ENCODE measurements at regions of chr17 and their contacts with region 1.

Region 1: GRCh38 chr17:4565209-4566141 is 5.1 kb upstream of the GGT6 start:
- DNase-seq: peak; percentile 84
- H3K4me3 Mint-ChIP-seq: no peak overlapping the region
- H3K27ac Mint-ChIP-seq: peak overlapping the region; percentile 44
- H3K4me1 Mint-ChIP-seq: peaks cover 14% of the 10 kb centered on the region
- H3K27me3 Mint-ChIP-seq: no peaks in the 10 kb centered on the region
- CTCF ChIP-seq: peak; percentile 79

Region 2: DNA sequence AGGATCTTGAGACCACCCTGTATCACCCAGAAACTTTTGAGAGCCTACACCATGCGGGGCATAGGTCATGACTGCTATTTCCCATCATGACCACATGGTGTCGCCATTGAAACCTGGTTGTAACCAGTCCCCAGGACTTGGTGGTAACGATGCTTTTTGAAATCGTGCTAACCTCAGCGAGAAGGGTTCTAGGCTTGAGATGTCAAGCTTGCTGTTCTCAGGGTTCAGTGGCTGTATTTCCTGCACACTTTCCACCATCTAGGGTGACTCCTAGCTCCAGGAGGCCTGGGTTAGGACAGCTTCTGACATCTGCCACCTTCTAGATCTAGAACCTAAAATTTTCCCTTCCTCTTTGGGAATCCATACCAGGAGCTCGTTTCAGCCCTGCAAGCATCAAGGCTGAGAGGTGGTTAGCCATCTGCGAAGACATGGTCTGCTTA is 144.8 kb before region 1 on chr17:
- CTCF ChIA-PET with region 1: interaction called, 20 read pairs
- POLR2A ChIA-PET with region 1: no interaction called
- intact Hi-C with region 1: loop called (anchors 1 kb)
- DNase-seq: peak; percentile 75
- H3K4me3 Mint-ChIP-seq: no peak overlapping the region
- H3K27ac Mint-ChIP-seq: no peak overlapping the region
- H3K4me1 Mint-ChIP-seq: no peaks in the 10 kb centered on the region
- H3K27me3 Mint-ChIP-seq: no peaks in the 10 kb centered on the region
- CTCF ChIP-seq: peak; percentile 80

Region 3: GRCh38 chr17:4444782-4445473 is 120.5 kb before region 1 on chr17:
- CTCF ChIA-PET with region 1: no interaction called
- POLR2A ChIA-PET with region 1: no interaction called
- intact Hi-C with region 1: no loop called
- DNase-seq: peak; percentile 51
- H3K4me3 Mint-ChIP-seq: no peak overlapping the region
- H3K27ac Mint-ChIP-seq: no peak overlapping the region
- H3K4me1 Mint-ChIP-seq: peaks cover 8% of the 10 kb centered on the region
- H3K27me3 Mint-ChIP-seq: peaks cover 15% of the 10 kb centered on the region
- CTCF ChIP-seq: no peak

Region 4: GRCh38 chr17:4599505-4600306 is 34.2 kb after region 1 on chr17:
- CTCF ChIA-PET with region 1: interaction called, 13 read pairs
- POLR2A ChIA-PET with region 1: interaction called, 3 read pairs
- intact Hi-C with region 1: no loop called
- DNase-seq: no peak
- H3K4me3 Mint-ChIP-seq: no peak overlapping the region
- H3K27ac Mint-ChIP-seq: no peak overlapping the region
- H3K4me1 Mint-ChIP-seq: no peaks in the 10 kb centered on the region
- H3K27me3 Mint-ChIP-seq: peaks cover 20% of the 10 kb centered on the region
- CTCF ChIP-seq: no peak

Region 5: DNA sequence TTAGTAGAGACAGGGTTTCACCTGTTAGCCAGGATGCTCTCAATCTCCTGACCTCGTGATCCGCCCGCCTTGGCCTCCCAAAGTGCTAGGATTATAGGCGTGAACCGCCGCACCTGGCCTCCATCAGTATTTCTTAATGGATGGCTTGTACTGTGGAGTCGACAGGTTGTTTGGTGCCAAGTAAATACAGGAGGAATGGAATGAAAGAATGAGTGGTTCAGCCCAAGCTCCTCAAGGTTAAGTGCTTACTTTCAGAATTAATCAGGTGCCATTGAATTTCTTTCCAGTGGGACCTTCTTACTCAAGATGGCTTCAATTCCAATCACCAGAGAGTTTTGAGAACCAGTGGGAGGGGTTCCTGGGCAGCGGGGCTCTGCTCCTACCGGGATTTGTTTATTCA is 51.0 kb after region 1 on chr17:
- CTCF ChIA-PET with region 1: interaction called, 25 read pairs
- POLR2A ChIA-PET with region 1: no interaction called
- intact Hi-C with region 1: no loop called
- DNase-seq: no peak
- H3K4me3 Mint-ChIP-seq: no peak overlapping the region
- H3K27ac Mint-ChIP-seq: no peak overlapping the region
- H3K4me1 Mint-ChIP-seq: no peaks in the 10 kb centered on the region
- H3K27me3 Mint-ChIP-seq: peaks cover 33% of the 10 kb centered on the region
- CTCF ChIP-seq: no peak

Region 6: GRCh38 chr17:4631836-4632580 is 66.5 kb after region 1 on chr17:
- CTCF ChIA-PET with region 1: interaction called, 191 read pairs
- POLR2A ChIA-PET with region 1: interaction called, 3 read pairs
- intact Hi-C with region 1: no loop called
- DNase-seq: no peak
- H3K4me3 Mint-ChIP-seq: no peak overlapping the region
- H3K27ac Mint-ChIP-seq: no peak overlapping the region
- H3K4me1 Mint-ChIP-seq: no peaks in the 10 kb centered on the region
- H3K27me3 Mint-ChIP-seq: peaks cover 26% of the 10 kb centered on the region
- CTCF ChIP-seq: no peak

Region 7: DNA sequence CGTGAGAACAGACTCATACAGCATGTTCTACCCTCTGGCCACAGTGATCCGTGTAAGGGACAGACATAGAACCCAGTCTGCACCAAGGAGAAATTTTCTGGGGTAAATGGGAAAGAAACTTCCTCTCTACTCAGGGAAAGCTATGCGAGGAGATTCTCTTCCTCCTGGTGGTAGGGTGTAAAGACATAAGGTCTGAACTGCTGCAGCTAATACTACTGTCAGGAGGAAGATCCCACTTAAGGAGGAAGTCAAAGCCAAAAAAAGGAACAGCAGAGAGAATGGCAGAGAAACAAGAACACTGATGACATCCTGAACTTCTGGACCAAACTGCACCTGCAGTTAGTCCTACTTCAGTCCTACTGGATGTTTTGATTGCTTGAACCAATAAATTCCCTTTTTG is 199.1 kb after region 1 on chr17:
- CTCF ChIA-PET with region 1: no interaction called
- POLR2A ChIA-PET with region 1: no interaction called
- intact Hi-C with region 1: no loop called
- DNase-seq: no peak
- H3K4me3 Mint-ChIP-seq: no peak overlapping the region
- H3K27ac Mint-ChIP-seq: no peak overlapping the region
- H3K4me1 Mint-ChIP-seq: no peaks in the 10 kb centered on the region
- H3K27me3 Mint-ChIP-seq: peaks cover 18% of the 10 kb centered on the region
- CTCF ChIP-seq: no peak

Region 8: GRCh38 chr17:4872786-4873185 is 307.3 kb after region 1 on chr17:
- CTCF ChIA-PET with region 1: no interaction called
- POLR2A ChIA-PET with region 1: no interaction called
- intact Hi-C with region 1: no loop called
- DNase-seq: no peak
- H3K4me3 Mint-ChIP-seq: no peak overlapping the region
- H3K27ac Mint-ChIP-seq: peak overlapping the region; percentile 7
- H3K4me1 Mint-ChIP-seq: peaks cover 17% of the 10 kb centered on the region
- H3K27me3 Mint-ChIP-seq: no peaks in the 10 kb centered on the region
- CTCF ChIP-seq: no peak

Region 9: GRCh38 chr17:5065227-5065744 is 499.8 kb after region 1 on chr17:
- CTCF ChIA-PET with region 1: interaction called, 6 read pairs
- POLR2A ChIA-PET with region 1: no interaction called
- intact Hi-C with region 1: loop called (anchors 10 kb)
- DNase-seq: peak; percentile 28
- H3K4me3 Mint-ChIP-seq: no peak overlapping the region
- H3K27ac Mint-ChIP-seq: no peak overlapping the region
- H3K4me1 Mint-ChIP-seq: no peaks in the 10 kb centered on the region
- H3K27me3 Mint-ChIP-seq: peaks cover 10% of the 10 kb centered on the region
- CTCF ChIP-seq: no peak